ENCODE measurements at regions of chr10 and their contacts with region 1.

Region 1: GRCh38 chr10:15106352-15107013 is 9.3 kb downstream of the RPP38 start:
- DNase-seq: no peak
- H3K4me3 ChIP-seq: no peak overlapping the region
- CTCF ChIP-seq: peak; percentile 84

Region 2: GRCh38 chr10:14500172-14500765 is 606.2 kb before region 1 on chr10:
- CTCF ChIA-PET with region 1: interaction called, 13 read pairs
- POLR2A ChIA-PET with region 1: no interaction called
- DNase-seq: no peak
- H3K4me3 ChIP-seq: no peak overlapping the region
- CTCF ChIP-seq: no peak

Region 3: GRCh38 chr10:14954001-14954770 is 152.3 kb before region 1 on chr10 and contains the start of gene DCLRE1C:
- CTCF ChIA-PET with region 1: interaction called, 21 read pairs
- POLR2A ChIA-PET with region 1: no interaction called
- DNase-seq: peak; percentile 29
- H3K4me3 ChIP-seq: peak within 1 kb of the TSS; percentile 97
- CTCF ChIP-seq: no peak

Region 4: DNA sequence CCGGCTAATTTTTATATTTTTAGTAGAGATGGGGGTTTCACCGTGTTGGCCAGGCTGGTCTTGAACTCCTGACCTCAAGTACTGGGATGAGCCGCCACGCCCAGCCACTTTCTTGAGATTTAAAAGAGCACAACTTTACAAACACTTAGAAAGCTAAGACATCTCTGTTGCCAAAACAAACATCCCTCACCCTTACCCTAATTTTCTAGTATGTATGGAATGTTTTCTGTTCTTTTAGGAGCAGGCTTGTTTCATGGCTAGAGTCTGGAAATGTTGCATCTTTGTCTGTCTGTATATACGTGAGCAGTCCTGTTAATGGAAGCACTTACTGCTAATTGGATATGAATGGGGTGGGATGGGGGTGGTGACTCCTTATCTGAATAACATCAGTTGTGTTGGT is 59.9 kb before region 1 on chr10:
- CTCF ChIA-PET with region 1: no interaction called
- POLR2A ChIA-PET with region 1: no interaction called
- DNase-seq: peak; percentile 55
- H3K4me3 ChIP-seq: no peak overlapping the region
- CTCF ChIP-seq: no peak

Region 5: DNA sequence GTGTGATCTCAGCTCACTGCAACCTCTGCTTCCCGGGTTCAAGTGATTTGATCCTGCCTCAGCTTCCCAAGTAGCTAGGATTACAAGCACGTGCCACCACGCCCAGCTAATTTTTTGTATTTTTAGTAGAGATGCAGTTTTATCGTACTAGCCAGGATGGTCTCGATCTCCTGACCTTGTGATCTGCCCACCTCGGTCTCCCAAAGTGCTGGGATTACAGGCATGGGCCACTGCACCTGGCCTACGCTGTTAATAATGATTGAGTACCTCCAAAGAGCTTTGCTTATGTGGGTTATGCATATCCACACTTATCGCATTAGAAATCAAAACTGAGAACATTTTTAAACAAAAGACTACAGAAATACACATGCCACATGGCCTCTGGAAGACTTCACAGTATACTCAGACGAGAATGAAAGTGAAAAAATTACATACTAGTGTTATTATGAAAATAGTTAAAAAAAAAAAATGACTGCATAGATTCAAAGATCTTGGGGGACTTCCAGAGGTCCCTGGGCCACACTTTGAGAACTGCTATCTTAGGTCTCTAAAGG is 16.1 kb after region 1 on chr10:
- CTCF ChIA-PET with region 1: interaction called, 24 read pairs
- POLR2A ChIA-PET with region 1: interaction called, 3 read pairs
- DNase-seq: no peak
- H3K4me3 ChIP-seq: no peak overlapping the region
- CTCF ChIP-seq: no peak

Region 6: GRCh38 chr10:15267496-15267895 is 161.0 kb after region 1 on chr10:
- CTCF ChIA-PET with region 1: no interaction called
- POLR2A ChIA-PET with region 1: no interaction called
- DNase-seq: no peak
- H3K4me3 ChIP-seq: no peak overlapping the region
- CTCF ChIP-seq: no peak

Region 7: GRCh38 chr10:15313843-15314242 is 207.4 kb after region 1 on chr10:
- CTCF ChIA-PET with region 1: no interaction called
- POLR2A ChIA-PET with region 1: no interaction called
- DNase-seq: no peak
- H3K4me3 ChIP-seq: no peak overlapping the region
- CTCF ChIP-seq: no peak

Measured in AG04449 (cell line).